ENCODE measurements at regions of chr19 and their contacts with region 1.

Region 1: GRCh38 chr19:17859533-17860330 is at the start of gene RPL18A:
- DNase-seq: peak; percentile 85
- ATAC-seq: peak; percentile 91
- H3K4me3 Mint-ChIP-seq: peak within 1 kb of the TSS; percentile 99
- H3K27ac Mint-ChIP-seq: peak within 1 kb of the TSS; percentile 98
- H3K4me1 Mint-ChIP-seq: peaks cover 47% of the 10 kb centered on the region
- H3K27me3 Mint-ChIP-seq: no peaks in the 10 kb centered on the region
- CTCF ChIP-seq: no peak
- total RNA-seq, gene RPL18A: 4,113 and 4,404 TPM in 2 replicates

Region 2: GRCh38 chr19:17496337-17496997 is 363.3 kb before region 1 on chr19:
- CTCF ChIA-PET with region 1: interaction called, 16 read pairs
- POLR2A ChIA-PET with region 1: no interaction called
- intact Hi-C with region 1: loop called (anchors 1 kb)
- DNase-seq: peak; percentile 76
- ATAC-seq: peak; percentile 100
- H3K4me3 Mint-ChIP-seq: no peak overlapping the region
- H3K27ac Mint-ChIP-seq: no peak overlapping the region
- H3K4me1 Mint-ChIP-seq: peaks cover 27% of the 10 kb centered on the region
- H3K27me3 Mint-ChIP-seq: no peaks in the 10 kb centered on the region
- CTCF ChIP-seq: no peak

Region 3: DNA sequence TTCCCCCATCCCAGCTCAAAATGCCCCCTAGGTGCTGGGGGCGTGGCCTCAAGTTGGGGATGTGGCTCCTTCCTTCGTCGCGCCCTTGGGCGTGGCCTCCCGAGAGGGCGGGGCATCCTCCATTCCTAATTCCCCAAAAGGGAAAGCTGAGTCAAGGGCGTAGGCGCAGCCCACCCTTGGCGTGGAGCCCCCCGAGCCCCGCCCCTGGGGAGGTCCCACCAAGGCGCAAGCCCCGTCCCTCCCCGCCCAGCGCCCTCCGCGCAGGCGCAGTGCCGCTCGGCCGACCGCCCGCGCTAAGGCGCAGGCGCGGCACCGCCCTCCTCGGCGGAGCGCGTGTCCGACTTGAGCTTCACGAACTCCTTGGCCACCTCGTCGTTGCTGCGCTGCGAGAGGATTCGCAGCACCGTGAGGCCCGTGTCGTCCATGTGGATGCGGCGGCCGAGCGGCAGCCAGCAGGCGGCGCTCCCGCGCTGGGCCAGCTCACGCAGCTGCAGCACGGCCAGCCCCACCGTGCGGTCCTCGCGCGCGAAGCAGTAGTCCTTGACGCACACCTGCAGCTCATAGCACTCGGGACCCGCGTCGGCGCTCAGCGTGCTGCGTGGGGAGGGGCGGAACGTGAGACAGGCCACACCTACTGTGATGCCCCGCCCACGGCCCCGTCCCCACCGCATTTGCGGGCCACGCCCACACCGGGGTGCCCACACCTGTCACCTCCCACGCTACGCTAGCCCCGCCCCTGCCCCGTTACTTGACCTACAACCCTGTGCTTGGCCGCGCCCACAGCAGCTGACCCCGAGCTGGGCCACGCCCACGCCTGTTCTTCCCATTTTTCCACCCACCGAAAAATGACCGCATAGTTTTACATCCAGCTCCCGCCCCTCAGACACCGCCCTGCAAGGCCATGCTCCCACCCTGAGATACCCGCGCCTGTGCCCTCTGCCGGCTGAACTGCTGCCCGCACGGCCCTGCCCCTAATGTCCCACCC is 253.7 kb before region 1 on chr19:
- CTCF ChIA-PET with region 1: interaction called, 7 read pairs
- POLR2A ChIA-PET with region 1: interaction called, 4 read pairs
- intact Hi-C with region 1: loop called (anchors 2 kb)
- DNase-seq: peak; percentile 80
- ATAC-seq: peak; percentile 92
- H3K4me3 Mint-ChIP-seq: peak overlapping the region; percentile 83
- H3K27ac Mint-ChIP-seq: peak overlapping the region; percentile 69
- H3K4me1 Mint-ChIP-seq: peaks cover 15% of the 10 kb centered on the region
- H3K27me3 Mint-ChIP-seq: peaks cover 30% of the 10 kb centered on the region
- CTCF ChIP-seq: no peak

Region 4: DNA sequence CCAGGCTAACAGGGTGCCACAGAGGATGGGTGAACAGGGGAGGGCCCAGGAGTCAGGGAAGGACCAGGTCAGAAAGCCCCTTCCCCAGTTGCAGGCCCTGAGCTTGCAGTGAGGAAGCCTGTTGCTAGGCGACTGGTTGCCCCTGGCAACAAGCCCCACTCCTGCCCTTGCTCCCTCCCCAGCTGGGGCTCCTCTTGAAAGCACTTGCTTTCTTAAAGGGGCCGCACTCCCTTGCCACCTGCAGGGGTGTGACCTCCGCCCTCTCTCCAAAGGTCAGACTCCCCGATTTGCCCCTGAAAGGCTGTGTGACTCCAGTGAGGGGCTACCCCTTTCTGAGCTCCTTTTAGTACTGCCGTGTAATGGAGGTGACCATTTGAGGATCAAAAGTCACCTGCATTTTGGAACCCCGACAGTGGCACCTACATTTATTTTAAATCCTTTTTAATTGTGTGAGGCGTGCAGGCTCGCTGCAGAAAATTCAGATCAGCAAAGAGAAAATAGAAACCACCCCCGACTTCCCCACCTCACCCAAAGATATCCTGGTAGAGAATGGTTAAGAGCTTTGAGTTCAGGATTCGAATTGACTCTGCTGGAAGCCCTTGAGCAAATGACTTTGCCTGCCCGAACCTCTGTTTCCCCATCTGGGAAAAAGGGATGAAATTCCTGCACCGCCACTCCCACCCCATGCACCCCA is 103.6 kb before region 1 on chr19:
- CTCF ChIA-PET with region 1: interaction called, 10 read pairs
- POLR2A ChIA-PET with region 1: interaction called, 11 read pairs
- intact Hi-C with region 1: no loop called
- DNase-seq: peak; percentile 61
- ATAC-seq: no peak
- H3K4me3 Mint-ChIP-seq: peak overlapping the region; percentile 46
- H3K27ac Mint-ChIP-seq: peak overlapping the region; percentile 90
- H3K4me1 Mint-ChIP-seq: peaks cover 84% of the 10 kb centered on the region
- H3K27me3 Mint-ChIP-seq: no peaks in the 10 kb centered on the region
- CTCF ChIP-seq: no peak

Region 5: GRCh38 chr19:17794731-17795536 is 64.8 kb before region 1 on chr19 and contains the start of gene B3GNT3:
- CTCF ChIA-PET with region 1: interaction called, 6 read pairs
- POLR2A ChIA-PET with region 1: interaction called, 10 read pairs
- intact Hi-C with region 1: loop called (anchors 1 kb)
- DNase-seq: no peak
- ATAC-seq: peak; percentile 21
- H3K4me3 Mint-ChIP-seq: peak within 1 kb of the TSS; percentile 38
- H3K27ac Mint-ChIP-seq: no peak within 1 kb of the TSS
- H3K4me1 Mint-ChIP-seq: peaks cover 40% of the 10 kb centered on the region
- H3K27me3 Mint-ChIP-seq: peaks cover 15% of the 10 kb centered on the region
- CTCF ChIP-seq: no peak
- total RNA-seq, gene B3GNT3: not detected in 2 replicates

Region 6: DNA sequence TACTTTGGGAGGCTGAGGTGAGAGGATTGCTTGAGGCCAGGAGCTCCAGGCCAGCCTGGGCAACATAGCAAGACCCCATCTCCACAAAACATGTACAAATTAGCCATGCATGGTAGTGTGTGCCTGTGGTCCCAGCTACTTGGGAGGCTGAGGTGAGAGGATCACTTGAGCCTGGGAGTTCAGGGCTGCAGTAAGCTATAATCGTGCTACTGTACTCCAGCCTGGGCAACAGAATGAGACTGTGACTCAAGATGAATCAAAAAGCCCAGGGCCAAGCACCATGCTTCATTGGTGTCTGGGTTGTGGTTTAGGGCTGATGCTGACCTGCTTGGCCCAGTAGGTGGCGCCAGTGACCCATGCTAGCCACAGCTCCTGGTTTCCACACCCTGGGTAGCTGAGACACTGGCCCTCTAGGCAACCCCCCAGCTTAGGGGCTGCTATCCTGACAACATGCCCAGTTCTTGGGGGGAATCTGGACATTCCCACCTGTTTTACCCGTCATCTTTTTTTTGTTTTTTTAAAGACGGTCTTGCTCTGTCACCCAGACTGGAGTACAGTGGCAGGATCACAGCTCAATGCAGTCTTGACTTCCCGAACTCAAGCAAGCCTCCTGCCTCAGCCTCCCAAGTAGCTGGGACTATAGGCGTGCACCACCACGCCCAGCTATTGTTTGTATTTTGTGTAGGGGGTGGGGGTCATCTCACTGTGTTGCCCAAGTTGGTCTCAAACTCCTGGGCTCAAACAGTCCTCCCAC is 78.5 kb after region 1 on chr19:
- CTCF ChIA-PET with region 1: interaction called, 201 read pairs
- POLR2A ChIA-PET with region 1: interaction called, 299 read pairs
- intact Hi-C with region 1: no loop called
- DNase-seq: peak; percentile 78
- ATAC-seq: peak; percentile 98
- H3K4me3 Mint-ChIP-seq: no peak overlapping the region
- H3K27ac Mint-ChIP-seq: no peak overlapping the region
- H3K4me1 Mint-ChIP-seq: peaks cover 10% of the 10 kb centered on the region
- H3K27me3 Mint-ChIP-seq: no peaks in the 10 kb centered on the region
- CTCF ChIP-seq: no peak

Measured in activated B cell treated with CpG ODN at 0.5 μM for 24 hours (primary cell).